GM12878 (cell line): ENCODE measurements at regions of chr2 and their contacts with region 1.

Region 1: GRCh38 chr2:208346756-208347155 is 59.8 kb upstream of the PTH2R start:
- DNase-seq: no peak
- ATAC-seq: no peak
- H3K4me3 ChIP-seq: no peak overlapping the region
- H3K27ac ChIP-seq: no peak overlapping the region
- H3K4me1 ChIP-seq: no peaks in the 10 kb centered on the region
- H3K27me3 ChIP-seq: no peaks in the 10 kb centered on the region
- CTCF ChIP-seq: no peak
- EP300 ChIP-seq: no peak
- POLR2A ChIP-seq: no peak
- RAD21 ChIP-seq: no peak

Region 2: GRCh38 chr2:208326016-208326415 is 20.7 kb before region 1 on chr2:
- CTCF ChIA-PET with region 1: interaction called, 4 read pairs
- POLR2A ChIA-PET with region 1: interaction called, 3 read pairs
- RAD21 ChIA-PET with region 1: interaction called, 4 read pairs
- SMC1A ChIA-PET with region 1: interaction called, 10 read pairs
- in situ Hi-C with region 1: no loop called
- intact Hi-C with region 1: loop called (anchors 2 kb)
- DNase-seq: no peak
- ATAC-seq: no peak; the same call in 2 of the 3 replicates
- H3K4me3 ChIP-seq: no peak overlapping the region
- H3K27ac ChIP-seq: no peak overlapping the region
- H3K4me1 ChIP-seq: no peaks in the 10 kb centered on the region
- H3K27me3 ChIP-seq: no peaks in the 10 kb centered on the region
- CTCF ChIP-seq: no peak
- EP300 ChIP-seq: no peak
- POLR2A ChIP-seq: no peak
- RAD21 ChIP-seq: no peak

Region 3: GRCh38 chr2:208399202-208399601 is 52.4 kb after region 1 on chr2:
- CTCF ChIA-PET with region 1: no interaction called
- POLR2A ChIA-PET with region 1: no interaction called
- RAD21 ChIA-PET with region 1: no interaction called
- SMC1A ChIA-PET with region 1: no interaction called
- in situ Hi-C with region 1: no loop called
- intact Hi-C with region 1: no loop called
- DNase-seq: no peak
- ATAC-seq: no peak
- H3K4me3 ChIP-seq: no peak overlapping the region
- H3K27ac ChIP-seq: no peak overlapping the region
- H3K4me1 ChIP-seq: no peaks in the 10 kb centered on the region
- H3K27me3 ChIP-seq: no peaks in the 10 kb centered on the region
- CTCF ChIP-seq: no peak
- EP300 ChIP-seq: no peak
- POLR2A ChIP-seq: no peak
- RAD21 ChIP-seq: no peak